ENCODE measurements at regions of chr9 and their contacts with region 1.

Region 1: GRCh38 chr9:71285191-71285656 is 163.8 kb upstream of the TRPM3 start:
- DNase-seq: peak; percentile 72
- H3K4me3 ChIP-seq: no peak overlapping the region
- H3K27ac ChIP-seq: no peak overlapping the region
- H3K4me1 ChIP-seq: no peaks in the 10 kb centered on the region
- H3K27me3 ChIP-seq: no peaks in the 10 kb centered on the region
- CTCF ChIP-seq: peak; percentile 80

Region 2: GRCh38 chr9:71490810-71491209 is 205.6 kb after region 1 on chr9:
- CTCF ChIA-PET with region 1: no interaction called
- POLR2A ChIA-PET with region 1: no interaction called
- intact Hi-C with region 1: no loop called
- DNase-seq: peak; percentile 7
- H3K4me3 ChIP-seq: no peak overlapping the region
- H3K27ac ChIP-seq: no peak overlapping the region
- H3K4me1 ChIP-seq: no peaks in the 10 kb centered on the region
- H3K27me3 ChIP-seq: peaks cover 63% of the 10 kb centered on the region
- CTCF ChIP-seq: peak; percentile 46

Region 3: DNA sequence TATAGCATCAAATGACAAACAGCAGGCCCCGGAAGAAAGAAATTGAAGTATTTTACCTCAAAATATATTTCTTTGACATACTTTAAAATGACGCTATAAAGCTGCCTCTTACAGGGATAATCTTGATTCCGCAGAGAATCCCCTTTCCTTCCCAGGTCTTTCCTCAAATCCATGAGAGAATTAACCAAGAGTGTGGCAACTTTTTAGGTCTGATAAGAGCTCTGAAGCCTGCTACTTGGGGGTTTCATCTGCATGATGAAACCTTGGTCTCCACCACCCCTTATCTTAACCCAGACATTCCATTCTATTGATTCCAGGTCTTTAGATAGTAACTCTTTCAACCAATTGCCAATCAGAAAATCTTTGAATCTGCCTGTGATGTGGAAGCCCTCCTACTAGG is 309.3 kb after region 1 on chr9:
- CTCF ChIA-PET with region 1: no interaction called
- POLR2A ChIA-PET with region 1: no interaction called
- intact Hi-C with region 1: no loop called
- DNase-seq: no peak
- H3K4me3 ChIP-seq: no peak overlapping the region
- H3K27ac ChIP-seq: no peak overlapping the region
- H3K4me1 ChIP-seq: no peaks in the 10 kb centered on the region
- H3K27me3 ChIP-seq: no peaks in the 10 kb centered on the region
- CTCF ChIP-seq: no peak

Region 4: GRCh38 chr9:71819115-71819739 is 534.0 kb after region 1 on chr9:
- CTCF ChIA-PET with region 1: no interaction called
- POLR2A ChIA-PET with region 1: no interaction called
- intact Hi-C with region 1: loop called (anchors 5 kb)
- DNase-seq: peak; percentile 34
- H3K4me3 ChIP-seq: no peak overlapping the region
- H3K27ac ChIP-seq: no peak overlapping the region
- H3K4me1 ChIP-seq: no peaks in the 10 kb centered on the region
- H3K27me3 ChIP-seq: no peaks in the 10 kb centered on the region
- CTCF ChIP-seq: peak; percentile 83

Region 5: GRCh38 chr9:72022841-72023240 is 737.6 kb after region 1 on chr9:
- CTCF ChIA-PET with region 1: interaction called, 5 read pairs
- POLR2A ChIA-PET with region 1: no interaction called
- intact Hi-C with region 1: loop called (anchors 5 kb)
- DNase-seq: no peak
- H3K4me3 ChIP-seq: no peak overlapping the region
- H3K27ac ChIP-seq: no peak overlapping the region
- H3K4me1 ChIP-seq: no peaks in the 10 kb centered on the region
- H3K27me3 ChIP-seq: no peaks in the 10 kb centered on the region
- CTCF ChIP-seq: no peak